A549 (cell line): ENCODE measurements at regions of chr14 and their contacts with region 1.

Region 1: DNA sequence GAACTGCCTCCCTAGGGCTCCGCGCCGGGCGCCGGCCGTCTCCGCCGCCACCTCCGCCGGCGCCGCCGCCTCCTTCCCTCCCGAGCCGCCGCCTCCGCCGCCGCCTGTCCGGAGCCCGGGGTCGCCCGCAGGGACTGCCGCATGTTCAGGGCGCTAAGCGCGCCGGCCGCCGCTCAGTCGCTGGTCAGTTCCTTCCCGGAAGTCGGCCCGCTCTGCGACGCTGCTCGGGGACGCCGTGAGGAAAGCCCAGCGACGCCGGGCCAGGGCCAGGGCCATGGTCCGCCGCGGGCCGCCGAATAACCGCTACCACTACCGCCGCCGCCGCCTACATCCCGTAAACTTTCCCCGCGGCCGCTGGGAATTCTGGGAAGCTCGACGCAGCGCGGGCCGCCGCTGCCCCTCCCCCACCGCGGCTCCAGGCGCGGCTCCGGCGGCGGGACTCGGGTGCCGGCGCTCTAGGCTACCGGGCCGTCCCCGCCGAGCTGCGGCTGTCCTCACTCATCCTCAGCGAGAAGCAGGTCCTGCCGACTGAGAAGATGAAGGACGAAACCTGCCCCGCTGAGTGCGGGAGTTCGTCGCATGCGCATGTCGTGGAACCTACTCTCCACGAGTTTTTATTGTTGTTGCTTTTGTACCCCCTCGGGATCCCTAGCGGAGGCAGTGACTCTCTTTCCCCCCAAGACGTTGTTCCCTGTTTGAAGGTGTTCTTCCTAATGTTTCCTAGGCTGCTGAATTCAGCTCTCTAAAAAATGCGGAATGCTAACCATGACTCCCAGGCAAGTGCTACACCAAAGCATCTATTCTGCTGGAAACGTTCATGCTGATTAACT is at the start of gene SAV1:
- DNase-seq: peak in 1 of 2 experiments; percentile 83
- ATAC-seq: peak; percentile 86 to 88
- H3K4me3 ChIP-seq: peak within 1 kb of the TSS; percentile 74
- H3K27ac ChIP-seq: peak within 1 kb of the TSS; percentile 87 to 96
- H3K4me1 ChIP-seq: peaks cover 16% of the 10 kb centered on the region
- CTCF ChIP-seq: 0 out of 3 replicates have a peak, but pooled peaks have one; percentile 10
- EP300 ChIP-seq: no peak
- POLR2A ChIP-seq: peak; percentile 92
- RAD21 ChIP-seq: no peak
- polyA plus RNA-seq, gene SAV1: 20.1 and 20.3 TPM in 2 replicates

Region 2: DNA sequence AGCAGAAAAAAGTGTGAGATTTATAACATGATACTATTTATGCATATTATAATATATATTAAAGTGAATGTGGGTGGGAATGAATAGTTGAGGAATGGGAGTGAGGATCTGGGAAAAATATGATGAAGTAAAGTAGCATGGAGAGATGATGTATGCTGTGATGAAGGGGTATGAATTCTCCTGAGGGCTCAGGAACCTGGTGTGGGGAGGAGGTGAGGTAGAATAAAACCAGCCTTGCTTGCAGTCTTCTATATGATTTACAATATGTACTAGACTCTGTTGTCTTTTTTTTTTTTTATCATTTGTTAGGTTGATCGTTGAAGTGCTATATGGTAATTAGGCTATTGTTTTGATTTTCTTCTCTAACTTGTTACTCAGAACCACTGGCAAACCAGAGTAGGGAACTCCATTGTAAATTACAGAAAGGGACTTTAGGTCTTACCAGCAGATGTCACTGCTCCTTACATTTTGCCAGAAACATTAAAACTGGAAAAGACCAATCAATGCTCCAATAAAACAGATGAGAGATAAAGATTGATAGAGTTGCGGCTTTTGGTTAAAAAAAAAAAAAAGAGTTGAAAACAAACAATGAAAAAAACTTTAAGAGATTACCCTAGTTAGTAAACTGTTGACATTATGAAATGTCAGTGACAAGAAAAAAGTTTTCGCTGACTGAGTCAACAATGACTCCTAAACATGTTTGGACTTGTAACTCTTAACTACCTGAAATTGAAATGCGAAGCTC is 68.3 kb before region 1 on chr14:
- CTCF ChIA-PET with region 1: interaction called, 4 read pairs
- POLR2A ChIA-PET with region 1: interaction called, 15 read pairs
- DNase-seq: peak; percentile 14 to 62
- ATAC-seq: peak; percentile 79 to 82; a peak in 4 of 6 replicates
- H3K4me3 ChIP-seq: peak overlapping the region; percentile 31; the same call in 2 of the 3 replicates
- H3K27ac ChIP-seq: peak overlapping the region; percentile 35 to 74; a peak in 5 of 6 replicates
- H3K4me1 ChIP-seq: peaks cover 20% of the 10 kb centered on the region
- CTCF ChIP-seq: peak; percentile 85
- EP300 ChIP-seq: no peak
- POLR2A ChIP-seq: no peak
- RAD21 ChIP-seq: peak; percentile 78 to 79

Region 3: DNA sequence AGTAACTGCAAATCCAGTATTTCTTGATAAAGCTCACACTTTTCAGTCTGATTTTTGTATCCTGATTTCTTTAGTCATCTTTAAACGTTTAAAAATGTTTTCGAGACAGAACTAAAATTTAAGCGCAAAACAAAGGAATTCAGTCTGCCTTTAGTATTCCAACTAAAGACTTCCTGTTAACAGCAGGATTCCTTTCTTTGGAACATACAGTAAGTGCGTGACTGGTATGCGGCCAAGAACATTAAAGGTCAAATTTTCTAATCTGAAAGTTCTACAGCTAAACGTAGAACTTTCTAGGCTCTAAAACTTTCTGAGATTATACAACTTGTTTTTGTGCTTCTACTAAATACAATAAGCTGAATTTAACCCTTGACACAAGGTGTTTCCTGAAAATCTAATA is 10.0 kb before region 1 on chr14:
- CTCF ChIA-PET with region 1: no interaction called
- POLR2A ChIA-PET with region 1: interaction called, 21 read pairs
- DNase-seq: no peak
- ATAC-seq: peak; percentile 64; a peak in 4 of 6 replicates
- H3K4me3 ChIP-seq: no peak overlapping the region
- H3K27ac ChIP-seq: peak overlapping the region; percentile 19 to 60; a peak in 5 of 6 replicates
- H3K4me1 ChIP-seq: peaks cover 20% of the 10 kb centered on the region
- CTCF ChIP-seq: no peak
- EP300 ChIP-seq: no peak
- POLR2A ChIP-seq: no peak
- RAD21 ChIP-seq: no peak

Region 4: DNA sequence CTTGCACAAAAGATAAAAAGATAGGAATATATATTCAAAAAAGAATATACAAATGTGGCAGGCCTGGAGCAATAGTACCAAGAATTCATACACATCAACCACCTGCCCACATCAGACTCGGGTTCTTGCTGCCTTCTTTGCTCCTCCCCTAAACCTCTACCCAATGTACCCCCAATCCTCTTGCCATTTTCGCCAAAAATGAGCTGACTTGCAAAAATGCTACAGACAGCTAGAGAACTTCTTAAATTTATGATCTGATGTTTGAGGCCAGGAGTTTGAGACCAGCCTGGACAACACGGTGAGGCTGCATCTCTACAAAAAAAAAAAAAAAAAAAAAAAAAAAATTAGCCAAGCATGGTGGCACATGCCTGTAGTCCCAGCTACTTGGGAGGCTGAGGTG is 42.8 kb after region 1 on chr14:
- CTCF ChIA-PET with region 1: interaction called, 3 read pairs
- POLR2A ChIA-PET with region 1: interaction called, 16 read pairs
- DNase-seq: no peak
- ATAC-seq: no peak
- H3K4me3 ChIP-seq: no peak overlapping the region
- H3K27ac ChIP-seq: no peak overlapping the region
- H3K4me1 ChIP-seq: no peaks in the 10 kb centered on the region
- CTCF ChIP-seq: no peak
- EP300 ChIP-seq: no peak
- POLR2A ChIP-seq: no peak
- RAD21 ChIP-seq: no peak

Region 5: DNA sequence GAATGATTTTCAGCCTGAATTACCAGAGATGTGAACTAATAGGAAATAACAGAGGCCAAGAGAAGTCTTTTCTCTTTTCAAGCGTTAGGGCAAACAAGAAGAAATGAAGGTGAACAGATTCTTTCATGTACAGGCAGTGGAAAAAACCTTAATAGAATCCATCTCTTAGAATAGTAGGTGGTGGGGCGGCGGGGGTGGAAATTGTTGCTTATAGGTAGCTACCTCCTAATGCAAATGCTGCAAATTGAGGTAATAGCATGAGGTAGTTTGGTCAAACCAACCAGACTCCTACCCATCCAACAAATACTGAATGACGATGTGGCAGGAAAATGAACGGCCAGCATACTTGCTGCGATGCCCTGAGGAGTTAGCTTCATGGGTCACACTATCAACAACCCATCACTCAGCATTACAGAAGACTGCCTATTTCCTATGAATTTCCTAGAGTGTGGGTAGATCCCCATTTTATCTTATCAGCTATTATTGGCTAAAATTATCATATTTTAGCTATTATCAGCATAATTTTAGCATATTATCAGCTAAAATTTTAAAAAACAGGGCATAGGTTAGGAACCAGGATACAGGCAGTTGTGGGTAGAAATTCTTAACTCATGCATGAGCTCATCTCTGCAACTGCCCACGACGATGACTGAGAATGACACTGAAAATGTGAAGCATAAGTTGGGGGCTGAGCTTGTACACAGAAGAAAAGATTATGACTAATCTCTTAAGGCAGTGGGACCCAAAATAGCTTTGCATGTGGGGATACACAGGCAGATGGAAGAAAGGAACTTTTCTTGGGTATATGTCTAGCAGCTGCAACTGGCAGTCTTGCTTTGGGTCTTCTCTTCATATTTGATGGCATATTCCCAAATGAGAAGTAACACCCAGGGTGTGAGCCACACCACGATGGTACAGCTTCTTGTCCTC is 94.1 kb after region 1 on chr14:
- CTCF ChIA-PET with region 1: no interaction called
- POLR2A ChIA-PET with region 1: interaction called, 12 read pairs
- DNase-seq: no peak
- ATAC-seq: no peak
- H3K4me3 ChIP-seq: no peak overlapping the region
- H3K27ac ChIP-seq: no peak overlapping the region; a peak in 1 of 6 replicates
- H3K4me1 ChIP-seq: peaks cover 15% of the 10 kb centered on the region; the same call in 2 of the 3 replicates
- CTCF ChIP-seq: no peak
- EP300 ChIP-seq: no peak
- POLR2A ChIP-seq: no peak
- RAD21 ChIP-seq: no peak

Region 6: DNA sequence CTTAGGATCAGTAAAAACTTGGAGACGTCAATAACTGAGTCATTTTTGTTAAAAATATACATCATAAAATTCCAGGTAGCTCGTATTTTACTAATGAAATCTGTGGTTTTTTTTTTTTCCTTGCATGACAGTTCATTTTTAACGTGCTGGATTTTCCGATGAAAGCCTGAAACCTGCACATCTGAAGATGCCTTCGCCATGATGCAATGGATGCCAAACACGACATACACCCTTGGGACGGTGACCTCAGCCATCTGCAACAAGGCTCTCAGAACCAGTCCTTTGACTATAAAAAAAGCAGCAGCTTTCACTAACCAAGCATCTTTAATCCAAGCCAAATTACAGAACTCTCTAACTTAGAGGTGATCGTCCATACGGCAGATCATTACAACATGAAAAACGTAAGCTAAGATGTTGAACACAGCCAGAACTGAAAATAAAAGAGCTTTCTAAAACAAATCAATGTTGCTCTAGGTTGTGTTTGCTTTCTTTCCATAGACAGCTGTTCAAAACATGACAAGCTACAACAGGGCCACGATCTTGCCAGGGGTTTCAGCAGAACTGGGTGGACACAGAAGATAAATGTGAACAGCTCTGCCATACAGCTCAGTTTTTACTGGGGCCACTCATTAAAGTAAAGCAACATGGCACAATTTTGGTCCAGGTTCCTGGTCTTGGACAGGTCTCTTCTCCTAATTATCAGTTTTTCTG is 155.0 kb after region 1 on chr14:
- CTCF ChIA-PET with region 1: no interaction called
- POLR2A ChIA-PET with region 1: no interaction called
- DNase-seq: no peak
- ATAC-seq: no peak
- H3K4me3 ChIP-seq: no peak overlapping the region
- H3K27ac ChIP-seq: no peak overlapping the region
- H3K4me1 ChIP-seq: no peaks in the 10 kb centered on the region
- CTCF ChIP-seq: no peak
- EP300 ChIP-seq: no peak
- POLR2A ChIP-seq: no peak
- RAD21 ChIP-seq: no peak